ENCODE measurements at regions of chr11 and their contacts with region 1.

Region 1: DNA sequence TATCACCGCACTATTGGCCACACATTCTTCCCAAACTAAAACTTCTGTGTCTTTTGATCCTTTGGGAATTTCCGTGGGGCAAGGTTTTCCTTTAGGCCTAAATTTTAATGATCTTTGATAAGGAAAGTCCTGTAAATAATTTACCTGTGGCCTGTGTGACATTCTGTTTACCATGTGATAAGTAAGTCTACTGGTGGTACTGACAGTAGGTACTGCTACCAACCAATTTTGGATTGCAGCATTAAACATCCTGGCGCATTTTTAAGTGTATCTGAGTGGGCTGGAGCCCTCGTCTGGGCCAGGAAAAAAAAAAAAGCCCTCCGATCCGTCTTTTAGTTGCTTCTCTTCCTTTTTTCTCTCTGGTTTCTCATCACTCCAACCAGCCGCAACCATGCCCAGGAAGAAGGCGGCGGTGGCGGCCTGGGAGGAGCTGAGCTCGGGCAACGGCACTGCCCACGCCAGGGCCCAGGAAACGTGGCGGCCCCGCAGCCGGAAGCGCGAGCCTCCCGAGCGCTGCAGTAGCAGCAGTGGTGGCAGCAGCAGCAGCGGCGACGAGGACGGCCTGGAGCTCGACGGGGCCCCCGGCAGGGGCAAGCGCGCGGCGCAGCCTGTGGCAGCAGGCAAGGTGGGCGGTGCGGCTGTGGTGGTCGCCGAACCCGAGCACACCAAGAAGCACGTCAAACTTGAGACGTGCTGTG is 33.6 kb downstream of the ASRGL1 start:
- DNase-seq: no peak
- ATAC-seq: no peak
- H3K4me3 ChIP-seq: no peak overlapping the region
- H3K27ac ChIP-seq: no peak overlapping the region
- H3K4me1 ChIP-seq: no peaks in the 10 kb centered on the region
- H3K27me3 ChIP-seq: no peaks in the 10 kb centered on the region
- CTCF ChIP-seq: no peak
- POLR2A ChIP-seq: no peak
- RAD21 ChIP-seq: no peak

Region 2: GRCh38 chr11:62157603-62158002 is 213.3 kb before region 1 on chr11:
- CTCF ChIA-PET with region 1: no interaction called
- POLR2A ChIA-PET with region 1: no interaction called
- RAD21 ChIA-PET with region 1: no interaction called
- intact Hi-C with region 1: no loop called
- DNase-seq: no peak
- ATAC-seq: no peak
- H3K4me3 ChIP-seq: no peak overlapping the region
- H3K27ac ChIP-seq: no peak overlapping the region
- H3K4me1 ChIP-seq: no peaks in the 10 kb centered on the region
- H3K27me3 ChIP-seq: no peaks in the 10 kb centered on the region
- CTCF ChIP-seq: no peak
- POLR2A ChIP-seq: no peak
- RAD21 ChIP-seq: no peak

Region 3: GRCh38 chr11:62233730-62234129 is 137.2 kb before region 1 on chr11:
- CTCF ChIA-PET with region 1: interaction called, 3 read pairs
- POLR2A ChIA-PET with region 1: no interaction called
- RAD21 ChIA-PET with region 1: no interaction called
- intact Hi-C with region 1: loop called (anchors 5 kb)
- DNase-seq: no peak
- ATAC-seq: no peak; the same call in 1 of the 2 replicates
- H3K4me3 ChIP-seq: no peak overlapping the region
- H3K27ac ChIP-seq: no peak overlapping the region
- H3K4me1 ChIP-seq: no peaks in the 10 kb centered on the region
- H3K27me3 ChIP-seq: peaks cover 34% of the 10 kb centered on the region; the same call in 1 of the 2 replicates
- CTCF ChIP-seq: peak; percentile 12 to 48 (median 31); a peak in 3 of 6 replicates
- POLR2A ChIP-seq: no peak
- RAD21 ChIP-seq: peak; percentile 49

Region 4: DNA sequence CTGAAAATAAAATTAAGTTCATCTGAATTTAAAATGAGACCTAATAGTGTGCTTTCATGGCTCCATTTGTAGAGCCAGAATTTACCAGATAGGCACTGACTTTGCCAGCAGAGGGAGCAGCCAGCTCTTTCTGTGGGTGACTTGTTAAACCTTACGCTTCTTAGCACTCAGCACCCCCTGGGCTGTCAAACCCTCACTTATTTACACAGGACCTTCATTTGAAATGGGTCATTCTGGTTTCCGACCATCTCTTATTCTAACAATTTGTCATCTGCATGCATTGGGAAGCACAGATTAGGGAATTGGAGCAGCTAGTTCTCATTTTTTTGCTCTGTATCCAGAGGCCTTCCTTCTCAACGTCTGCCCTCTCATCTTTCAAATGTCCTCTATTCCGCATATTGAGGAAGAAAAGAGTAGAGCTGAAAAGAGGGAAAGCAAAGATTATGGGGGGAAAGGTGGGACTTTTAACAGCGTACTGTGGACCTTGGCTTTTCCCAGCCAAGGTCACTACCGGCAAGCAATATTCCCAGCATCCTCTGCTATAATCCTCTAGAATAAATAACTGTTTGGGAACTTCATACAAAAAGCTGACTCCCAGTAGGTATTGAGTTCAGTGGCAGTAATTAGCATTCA is 30.5 kb before region 1 on chr11:
- CTCF ChIA-PET with region 1: interaction called, 13 read pairs
- POLR2A ChIA-PET with region 1: no interaction called
- RAD21 ChIA-PET with region 1: no interaction called
- intact Hi-C with region 1: no loop called
- DNase-seq: peak; percentile 19
- ATAC-seq: no peak
- H3K4me3 ChIP-seq: no peak overlapping the region
- H3K27ac ChIP-seq: no peak overlapping the region
- H3K4me1 ChIP-seq: peaks cover 0 to 17% of the 10 kb centered on the region in 2 experiments; a peak in 2 of 4 replicates
- H3K27me3 ChIP-seq: no peaks in the 10 kb centered on the region
- CTCF ChIP-seq: peak; percentile 57 to 72 (median 66)
- POLR2A ChIP-seq: no peak
- RAD21 ChIP-seq: peak; percentile 61

Region 5: GRCh38 chr11:62487738-62488551 is 117.1 kb after region 1 on chr11:
- CTCF ChIA-PET with region 1: no interaction called
- POLR2A ChIA-PET with region 1: no interaction called
- RAD21 ChIA-PET with region 1: no interaction called
- intact Hi-C with region 1: no loop called
- DNase-seq: no peak
- ATAC-seq: no peak
- H3K4me3 ChIP-seq: no peak overlapping the region
- H3K27ac ChIP-seq: no peak overlapping the region
- H3K4me1 ChIP-seq: no peaks in the 10 kb centered on the region
- H3K27me3 ChIP-seq: no peaks in the 10 kb centered on the region
- CTCF ChIP-seq: no peak
- POLR2A ChIP-seq: no peak
- RAD21 ChIP-seq: no peak

Region 6: DNA sequence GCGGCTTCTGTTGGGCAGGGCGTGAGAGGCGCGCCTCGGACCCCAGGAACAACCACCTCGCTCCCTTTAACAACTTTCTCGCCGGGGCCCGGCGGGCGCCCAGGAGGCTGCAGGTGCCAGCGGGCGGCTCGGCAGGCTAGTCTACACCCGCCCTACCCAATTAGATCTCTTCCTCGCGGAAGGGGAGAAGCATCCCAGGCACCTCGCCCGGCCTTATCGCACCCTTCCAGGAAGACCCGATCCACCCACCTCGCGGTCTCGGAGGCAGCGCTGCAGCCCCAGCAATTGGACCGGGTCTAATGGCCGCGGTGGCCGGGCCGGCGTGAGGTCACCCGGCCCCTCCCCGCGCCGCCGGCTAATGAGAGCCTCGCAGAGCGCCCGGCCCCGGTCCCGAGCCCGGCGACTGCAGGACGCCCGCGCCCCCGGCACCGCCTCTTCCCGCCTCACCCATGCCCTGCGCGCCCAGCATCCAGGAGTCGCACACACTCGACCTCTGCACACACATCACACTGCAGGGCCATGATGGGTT is 1243.3 kb after region 1 on chr11 and contains the start of gene PLAAT3:
- CTCF ChIA-PET with region 1: no interaction called
- POLR2A ChIA-PET with region 1: no interaction called
- RAD21 ChIA-PET with region 1: no interaction called
- intact Hi-C with region 1: no loop called
- DNase-seq: peak; percentile 36
- ATAC-seq: peak; percentile 90
- H3K4me3 ChIP-seq: peak within 1 kb of the TSS; percentile 62 to 67
- H3K27ac ChIP-seq: peak within 1 kb of the TSS; percentile 41; the same call in 1 of the 2 replicates
- H3K4me1 ChIP-seq: peaks cover 13% of the 10 kb centered on the region in 2 experiments; a peak in 3 of 4 replicates
- H3K27me3 ChIP-seq: no peaks in the 10 kb centered on the region
- CTCF ChIP-seq: no peak
- POLR2A ChIP-seq: no peak
- RAD21 ChIP-seq: no peak
- total RNA-seq, gene PLAAT3: 31.1 TPM